GM13977 (cell line): ENCODE measurements at regions of chr17 and their contacts with region 1.

Region 1: GRCh38 chr17:44522883-44523671 is 19.9 kb upstream of the GPATCH8 start:
- DNase-seq: peak; percentile 83
- CTCF ChIP-seq: peak; percentile 78

Region 2: DNA sequence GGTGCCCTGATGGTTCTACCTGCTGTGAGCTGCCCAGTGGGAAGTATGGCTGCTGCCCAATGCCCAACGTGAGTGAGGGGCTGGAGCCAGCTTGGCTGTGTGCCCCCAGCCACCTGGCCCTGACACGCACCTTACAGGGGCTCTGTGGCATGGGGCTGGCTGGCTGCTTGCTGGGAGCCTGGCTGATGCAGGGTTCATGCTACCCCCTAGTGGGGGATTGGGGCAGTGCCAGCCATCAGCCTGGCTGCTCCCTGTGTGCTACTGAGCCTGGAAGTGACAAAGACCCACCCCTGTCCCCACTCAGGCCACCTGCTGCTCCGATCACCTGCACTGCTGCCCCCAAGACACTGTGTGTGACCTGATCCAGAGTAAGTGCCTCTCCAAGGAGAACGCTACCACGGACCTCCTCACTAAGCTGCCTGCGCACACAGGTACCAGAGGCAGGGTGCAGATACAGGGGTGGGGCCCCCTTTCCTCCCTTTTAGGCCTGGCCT is 172.3 kb before region 1 on chr17:
- in situ Hi-C with region 1: no loop called
- DNase-seq: peak; percentile 86
- CTCF ChIP-seq: peak; percentile 88

Region 3: DNA sequence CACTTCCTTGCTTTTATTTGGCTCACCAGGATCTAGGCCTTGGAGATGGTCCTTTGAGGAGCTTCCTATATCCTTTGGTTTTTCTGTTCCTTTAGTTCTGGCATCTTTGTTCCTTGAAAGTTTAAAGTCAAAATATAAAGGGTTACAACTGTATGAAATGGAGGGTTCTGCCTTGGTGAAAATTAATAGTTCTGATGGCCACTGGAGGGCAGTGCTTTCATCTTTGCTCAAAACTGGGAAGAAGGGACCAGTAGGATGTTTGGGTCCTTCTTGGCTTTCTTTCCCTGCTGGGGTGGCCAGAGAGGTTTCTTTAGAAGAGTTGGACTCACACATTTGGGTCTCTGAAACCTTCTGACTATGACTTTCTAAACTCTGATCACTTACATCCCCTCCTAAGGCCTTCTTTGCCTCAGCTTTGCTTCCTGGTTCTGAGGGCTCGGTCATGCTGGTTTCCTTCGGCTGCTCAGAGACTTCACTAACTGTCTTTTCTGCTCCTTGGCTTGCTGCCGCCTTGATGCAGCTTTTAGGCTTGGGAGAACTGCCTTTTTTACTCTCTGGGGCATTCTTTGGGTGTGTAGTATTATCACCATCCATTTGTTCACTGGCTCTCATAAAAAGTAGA is 122.7 kb before region 1 on chr17:
- in situ Hi-C with region 1: loop called (anchors 10 kb)
- DNase-seq: no peak
- CTCF ChIP-seq: peak; percentile 56